ENCODE measurements at regions of chr11 and their contacts with region 1.

Region 1: GRCh38 chr11:107583629-107584195 is 7.2 kb upstream of the ELMOD1 start:
- DNase-seq: no peak
- H3K27ac ChIP-seq: no peak overlapping the region
- CTCF ChIP-seq: no peak

Region 2: DNA sequence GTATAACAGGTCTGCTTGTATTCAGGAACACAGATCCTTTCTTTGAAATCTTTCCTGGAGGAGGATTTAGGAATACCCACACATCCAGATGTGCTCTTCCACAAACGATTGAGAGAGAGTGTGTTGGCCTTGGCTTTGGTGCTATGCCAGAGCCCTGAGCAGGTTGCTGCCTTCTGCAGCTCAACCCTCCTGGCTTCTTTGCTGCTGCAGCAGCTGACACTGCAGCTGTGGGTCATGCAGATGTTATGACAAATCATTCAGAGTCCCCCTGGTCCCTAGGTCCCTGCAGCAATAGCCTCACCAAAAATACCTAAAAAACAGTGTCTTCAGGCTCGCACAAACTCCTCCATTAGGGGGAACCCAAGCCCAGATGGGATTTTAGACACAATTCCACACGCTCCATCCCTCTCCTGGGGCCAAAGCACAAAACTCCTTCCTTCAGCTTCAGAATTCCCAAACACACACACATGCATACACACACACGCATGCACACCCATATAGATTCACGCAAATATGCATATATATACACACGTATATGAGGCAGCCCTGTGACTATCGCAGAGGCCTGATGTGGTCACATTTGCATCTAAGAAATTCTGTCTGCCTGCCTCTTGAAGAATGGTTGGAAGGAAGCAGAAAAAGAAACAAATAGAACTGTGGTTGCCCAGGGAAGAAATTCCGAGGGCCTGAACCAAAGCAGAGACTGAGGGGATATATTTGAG is 92.8 kb after region 1 on chr11:
- CTCF ChIA-PET with region 1: interaction called, 4 read pairs
- POLR2A ChIA-PET with region 1: interaction called, 14 read pairs
- DNase-seq: no peak
- H3K27ac ChIP-seq: no peak overlapping the region
- CTCF ChIP-seq: no peak